RWPE1 (cell line): ENCODE measurements at regions of chr12 and their contacts with region 1.

Region 1: DNA sequence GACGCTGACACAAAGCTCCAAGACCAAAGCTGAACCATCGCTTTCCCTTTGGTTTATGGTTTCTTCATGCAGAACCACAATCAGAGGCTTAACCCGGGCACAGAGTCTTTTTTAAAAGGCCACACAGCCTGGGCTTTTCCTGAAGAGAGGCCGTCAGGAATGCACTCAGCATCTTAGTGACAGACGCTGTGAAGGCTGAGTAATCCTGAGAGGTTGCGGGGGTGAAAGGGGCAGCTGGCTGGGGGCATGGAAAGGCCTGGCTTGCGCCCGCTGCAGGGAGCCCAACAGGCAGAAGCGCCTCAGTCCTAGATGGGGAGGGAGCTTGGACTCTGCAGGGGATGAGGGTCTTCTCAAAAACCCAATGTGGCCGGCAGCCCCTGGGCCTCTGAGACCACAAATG is 13.6 kb downstream of the CTDSP2 start:
- DNase-seq: no peak
- H3K27ac ChIP-seq: peak overlapping the region; percentile 49
- CTCF ChIP-seq: no peak

Region 2: DNA sequence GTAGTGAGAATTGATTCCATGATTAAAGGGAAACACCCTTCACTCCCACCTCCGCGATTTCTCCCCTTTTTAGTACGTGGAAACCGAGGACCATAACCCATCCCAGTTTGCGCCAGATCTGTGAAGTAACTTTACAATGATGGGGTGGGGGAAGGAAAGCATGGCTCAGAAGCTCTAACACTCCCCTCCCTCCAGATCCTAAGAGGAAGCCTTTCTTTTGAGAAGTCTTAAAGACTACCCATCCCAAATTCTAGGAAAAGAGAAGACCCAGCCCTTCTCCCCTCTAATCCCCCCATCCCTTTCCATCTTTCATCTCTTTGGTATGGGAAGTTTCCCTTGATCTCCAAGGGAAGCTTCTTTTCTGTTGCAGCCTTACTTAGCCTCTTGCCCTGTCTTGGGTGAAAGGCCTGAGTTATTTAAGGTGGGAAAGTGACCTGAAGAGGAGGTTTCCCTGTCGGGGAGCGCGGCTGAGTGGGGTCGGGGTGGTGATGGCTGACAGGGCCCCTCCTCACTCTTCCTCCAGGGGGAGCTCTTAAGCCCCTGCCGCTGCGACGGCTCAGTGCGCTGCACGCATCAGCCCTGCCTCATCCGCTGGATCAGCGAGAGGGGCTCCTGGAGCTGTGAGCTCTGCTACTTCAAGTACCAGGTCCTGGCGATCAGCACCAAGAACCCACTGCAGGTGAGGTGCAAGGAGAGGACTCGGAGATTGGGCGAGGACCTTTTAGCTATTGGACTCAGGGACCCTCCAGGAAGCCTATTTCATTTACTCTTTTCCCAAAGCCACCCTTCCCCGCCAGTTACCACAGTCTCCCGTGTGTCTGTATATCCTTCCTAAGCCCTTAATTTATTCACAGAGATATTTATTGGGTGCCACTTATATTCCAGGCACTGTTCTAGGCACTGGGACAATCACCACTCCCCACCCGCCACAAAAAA is 76.3 kb before region 1 on chr12:
- CTCF ChIA-PET with region 1: no interaction called
- POLR2A ChIA-PET with region 1: interaction called, 10 read pairs
- DNase-seq: peak; percentile 66
- H3K27ac ChIP-seq: no peak overlapping the region
- CTCF ChIP-seq: peak; percentile 82

Region 3: GRCh38 chr12:57904848-57905811 is 72.2 kb after region 1 on chr12:
- CTCF ChIA-PET with region 1: interaction called, 10 read pairs
- POLR2A ChIA-PET with region 1: no interaction called
- DNase-seq: peak; percentile 78
- H3K27ac ChIP-seq: no peak overlapping the region
- CTCF ChIP-seq: peak; percentile 100